ENCODE measurements at regions of chr15 and their contacts with region 1.

Region 1: GRCh38 chr15:55846116-55846707 is 103.3 kb upstream of the PRTG start:
- DNase-seq: peak in 9 of 14 experiments; percentile 2 to 75 (median 20)
- ATAC-seq: peak; percentile 73
- H3K4me3 ChIP-seq: no peak overlapping the region
- H3K4me3 Mint-ChIP-seq: no peak overlapping the region
- H3K27ac ChIP-seq: no peak overlapping the region
- H3K27ac Mint-ChIP-seq: no peak overlapping the region
- H3K4me1 ChIP-seq: no peaks in the 10 kb centered on the region
- H3K4me1 Mint-ChIP-seq: no peaks in the 10 kb centered on the region
- H3K27me3 ChIP-seq: no peaks in the 10 kb centered on the region
- H3K27me3 Mint-ChIP-seq: no peaks in the 10 kb centered on the region
- CTCF ChIP-seq: peak; percentile 76

Region 2: GRCh38 chr15:55789066-55789660 is 57.0 kb before region 1 on chr15:
- CTCF ChIA-PET with region 1: no interaction called
- POLR2A ChIA-PET with region 1: no interaction called
- intact Hi-C with region 1: loop called in 1 of 2 experiments (anchors 2 kb)
- DNase-seq: peak; percentile 9 to 58 (median 26)
- ATAC-seq: no peak
- H3K4me3 ChIP-seq: no peak overlapping the region
- H3K4me3 Mint-ChIP-seq: no peak overlapping the region
- H3K27ac ChIP-seq: no peak overlapping the region
- H3K27ac Mint-ChIP-seq: no peak overlapping the region
- H3K4me1 ChIP-seq: no peaks in the 10 kb centered on the region
- H3K4me1 Mint-ChIP-seq: no peaks in the 10 kb centered on the region
- H3K27me3 ChIP-seq: peaks cover 0 to 3% of the 10 kb centered on the region in 2 experiments
- H3K27me3 Mint-ChIP-seq: peaks cover 9% of the 10 kb centered on the region
- CTCF ChIP-seq: peak; percentile 55